Posterior cingulate gyrus (tissue), 11 donors: ENCODE measurements at regions of chr4 and their contacts with region 1.

Region 1: GRCh38 chr4:1693129-1693896 is 9.2 kb upstream of the FAM53A start:
- DNase-seq: peak in 7 of 10 donors; percentile 47 to 93 (median 61)

Region 2: GRCh38 chr4:1726146-1726934 is 33.0 kb after region 1 on chr4:
- intact Hi-C with region 1: loop called (anchors 1 kb)
- DNase-seq: peak; percentile 77 to 98 (median 94)